ENCODE measurements at regions of chr22 and their contacts with region 1.

Region 1: GRCh38 chr22:41091132-41092022 is 1.0 kb upstream of the EP300 start:
- DNase-seq: peak; percentile 99 to 100
- ATAC-seq: peak; percentile 96 to 99 (median 98)
- H3K4me3 ChIP-seq: peak overlapping the region; percentile 73 to 100 (median 98)
- H3K27ac ChIP-seq: peak overlapping the region; percentile 100
- H3K4me1 ChIP-seq: peaks cover 0 to 38% (median 30%) of the 10 kb centered on the region in 9 donors
- H3K27me3 ChIP-seq: no peaks in the 10 kb centered on the region
- CTCF ChIP-seq: no peak

Region 2: GRCh38 chr22:40950962-40951794 is 140.2 kb before region 1 on chr22 and contains the start of gene RBX1:
- intact Hi-C with region 1: loop called in 9 of 10 experiments (anchors 1 to 5 kb)
- DNase-seq: peak; percentile 98 to 99
- ATAC-seq: peak; percentile 96 to 99 (median 97)
- H3K4me3 ChIP-seq: peak within 1 kb of the TSS; percentile 60 to 91 (median 74)
- H3K27ac ChIP-seq: peak within 1 kb of the TSS; percentile 62 to 100 (median 94)
- H3K4me1 ChIP-seq: peaks cover 0 to 47% (median 30%) of the 10 kb centered on the region in 9 donors
- H3K27me3 ChIP-seq: no peaks in the 10 kb centered on the region
- CTCF ChIP-seq: no peak
- total RNA-seq, gene RBX1: 58.0 to 71.6 (median 59.8) TPM

Region 3: DNA sequence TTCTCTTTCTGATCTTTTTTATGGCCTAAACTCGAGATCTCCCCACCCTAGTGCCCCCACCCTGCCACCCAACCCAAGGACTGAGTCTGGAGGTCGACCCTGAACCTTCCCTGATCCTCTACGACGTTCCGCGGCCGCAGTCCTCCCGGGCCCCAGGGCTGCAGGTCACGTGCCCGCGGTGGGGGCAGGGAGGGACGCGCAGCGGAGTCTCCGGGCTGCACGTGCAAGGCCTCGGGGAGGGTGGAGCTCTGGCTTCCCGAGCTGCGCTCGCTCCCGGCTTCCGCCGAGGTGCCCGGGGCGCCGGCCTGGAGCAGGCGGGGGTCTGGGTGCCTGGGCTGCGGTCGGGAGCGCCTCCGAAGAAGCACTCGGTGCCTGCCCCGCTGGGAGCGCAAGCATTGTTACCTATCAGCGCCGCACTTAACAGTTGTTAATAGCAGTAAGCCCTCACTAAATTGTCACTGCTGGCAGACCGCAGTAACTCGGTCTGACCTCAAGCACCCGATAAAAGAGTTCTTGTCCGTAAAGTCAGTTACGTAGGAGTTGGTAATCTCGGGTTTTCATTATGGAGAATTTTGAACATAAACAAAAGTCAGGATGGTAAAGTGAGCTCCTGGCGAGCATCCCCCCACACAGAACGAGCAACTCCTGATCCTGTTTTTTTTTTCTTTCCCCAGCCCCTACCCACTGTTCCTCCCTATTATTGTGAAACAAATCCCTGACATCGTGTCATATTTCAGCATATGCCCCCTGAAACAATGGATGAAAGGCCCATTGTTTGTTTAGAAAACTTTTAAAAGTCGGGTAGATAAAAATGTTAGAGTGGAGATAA is 68.7 kb before region 1 on chr22:
- intact Hi-C with region 1: loop called in 7 of 10 experiments (anchors 1 to 10 kb)
- DNase-seq: peak; percentile 91 to 94
- ATAC-seq: peak; percentile 94 to 97 (median 95)
- H3K4me3 ChIP-seq: peak overlapping the region; percentile 66 to 91 (median 74)
- H3K27ac ChIP-seq: peak overlapping the region; percentile 66 to 100 (median 98)
- H3K4me1 ChIP-seq: peaks cover 3 to 18% (median 15%) of the 10 kb centered on the region in 9 donors
- H3K27me3 ChIP-seq: no peaks in the 10 kb centered on the region
- CTCF ChIP-seq: peak in 2 of 9 donors; percentile 3 to 16

Region 4: DNA sequence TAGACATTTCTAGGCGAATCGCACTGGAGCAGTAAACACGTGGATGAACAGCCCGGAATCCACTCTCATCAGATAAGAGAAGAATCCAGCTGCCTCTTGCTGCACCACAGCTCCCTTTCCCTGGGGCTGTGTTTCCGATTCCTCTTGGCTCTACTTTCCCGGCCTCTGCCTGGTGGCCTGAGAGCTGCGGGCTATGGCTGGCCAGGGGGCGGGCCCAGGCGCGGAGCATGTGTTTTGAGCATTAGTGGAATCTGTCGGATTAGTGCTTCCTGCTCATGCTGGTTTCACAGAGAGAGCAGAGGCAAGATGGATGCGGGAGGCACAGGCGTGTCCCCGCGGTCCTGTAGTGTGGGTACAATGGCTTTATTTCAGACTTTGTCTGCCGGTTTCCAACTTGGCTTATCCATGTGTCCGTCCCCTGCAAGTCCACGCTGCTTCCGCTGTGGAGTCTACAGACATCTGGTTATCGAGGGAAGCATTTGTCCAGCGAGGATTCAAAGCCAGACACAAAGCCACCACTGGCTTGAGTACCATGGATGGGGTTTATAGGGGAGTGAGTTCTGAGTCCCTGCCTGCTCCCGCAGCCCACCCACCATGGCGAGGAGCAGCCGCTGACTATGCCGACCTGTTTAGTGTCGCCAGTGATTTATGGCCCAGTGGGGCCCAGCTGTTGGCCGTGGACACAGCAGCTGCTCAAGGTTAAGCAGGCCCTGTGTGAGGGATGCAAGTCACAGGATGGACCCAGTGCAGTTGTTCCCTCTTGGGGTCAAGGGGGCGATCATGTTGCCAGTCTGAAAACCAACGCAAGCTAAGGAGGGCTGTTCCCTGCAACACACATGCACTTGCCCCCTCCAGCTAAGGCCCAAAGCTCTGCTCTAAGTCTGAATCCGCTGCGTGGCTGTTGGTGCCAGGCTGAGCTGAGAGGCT is 42.3 kb before region 1 on chr22:
- intact Hi-C with region 1: loop called in 1 of 10 experiments (anchors 1 kb)
- DNase-seq: peak; percentile 76 to 81
- ATAC-seq: peak; percentile 85 to 98 (median 96)
- H3K4me3 ChIP-seq: peak overlapping the region in 6 of 10 donors; percentile 31 to 43 (median 37)
- H3K27ac ChIP-seq: peak overlapping the region in 9 of 10 donors; percentile 26 to 79 (median 53)
- H3K4me1 ChIP-seq: peaks cover 0 to 27% (median 12%) of the 10 kb centered on the region in 9 donors
- H3K27me3 ChIP-seq: no peaks in the 10 kb centered on the region
- CTCF ChIP-seq: no peak

Region 5: DNA sequence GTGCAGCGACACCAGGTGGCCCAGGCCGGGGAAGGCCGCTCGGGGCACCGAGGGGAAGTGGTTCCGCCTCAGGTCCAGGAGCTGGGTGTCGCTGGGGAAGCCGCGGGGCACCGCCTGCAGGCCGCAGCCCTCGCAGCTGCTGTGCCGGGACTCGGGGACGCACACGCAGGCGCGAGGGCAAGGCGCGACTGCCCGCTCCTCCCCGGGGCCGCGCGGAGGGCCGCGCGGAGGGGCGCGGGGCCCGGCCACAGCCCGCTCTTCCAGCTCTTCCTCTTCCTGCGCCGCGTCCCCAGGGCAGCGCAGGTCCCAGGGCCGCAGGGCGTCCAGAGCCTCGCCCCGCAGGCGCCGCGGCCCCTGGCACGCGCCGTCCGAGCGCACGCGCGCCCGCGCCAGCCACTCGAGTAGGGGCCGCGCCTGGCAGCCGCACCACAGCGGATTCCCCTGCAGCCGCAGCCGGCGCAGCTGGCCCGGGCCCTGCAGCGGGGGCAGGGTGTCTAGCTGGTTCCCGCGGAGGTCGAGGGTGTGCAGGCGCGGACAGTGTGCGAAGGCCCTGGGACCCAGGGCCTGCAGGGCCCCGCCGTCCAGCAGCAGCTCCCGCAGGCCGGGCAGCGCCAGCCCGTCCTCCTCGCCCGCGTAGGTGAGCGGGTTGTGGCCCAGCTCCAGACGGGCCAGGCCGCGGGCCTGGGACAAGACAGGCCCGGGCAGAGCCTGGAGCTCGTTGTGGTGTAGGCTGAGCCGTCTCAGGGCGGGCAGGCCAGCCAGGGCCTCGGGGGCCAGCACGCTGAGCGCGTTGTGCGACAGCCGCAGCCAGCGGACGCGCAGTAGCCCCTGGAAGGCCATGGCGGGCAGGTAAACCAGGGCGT is 146.6 kb after region 1 on chr22:
- intact Hi-C with region 1: loop called in 1 of 10 experiments (anchors 5 kb)
- DNase-seq: peak; percentile 64 to 77
- ATAC-seq: peak; percentile 35 to 87 (median 74)
- H3K4me3 ChIP-seq: peak overlapping the region in 9 of 10 donors; percentile 28 to 55 (median 50)
- H3K27ac ChIP-seq: peak overlapping the region in 9 of 10 donors; percentile 46 to 76 (median 64)
- H3K4me1 ChIP-seq: peaks cover 8 to 37% (median 20%) of the 10 kb centered on the region in 9 donors
- H3K27me3 ChIP-seq: no peaks in the 10 kb centered on the region
- CTCF ChIP-seq: peak in 8 of 9 donors; percentile 35 to 77 (median 67)

Region 6: DNA sequence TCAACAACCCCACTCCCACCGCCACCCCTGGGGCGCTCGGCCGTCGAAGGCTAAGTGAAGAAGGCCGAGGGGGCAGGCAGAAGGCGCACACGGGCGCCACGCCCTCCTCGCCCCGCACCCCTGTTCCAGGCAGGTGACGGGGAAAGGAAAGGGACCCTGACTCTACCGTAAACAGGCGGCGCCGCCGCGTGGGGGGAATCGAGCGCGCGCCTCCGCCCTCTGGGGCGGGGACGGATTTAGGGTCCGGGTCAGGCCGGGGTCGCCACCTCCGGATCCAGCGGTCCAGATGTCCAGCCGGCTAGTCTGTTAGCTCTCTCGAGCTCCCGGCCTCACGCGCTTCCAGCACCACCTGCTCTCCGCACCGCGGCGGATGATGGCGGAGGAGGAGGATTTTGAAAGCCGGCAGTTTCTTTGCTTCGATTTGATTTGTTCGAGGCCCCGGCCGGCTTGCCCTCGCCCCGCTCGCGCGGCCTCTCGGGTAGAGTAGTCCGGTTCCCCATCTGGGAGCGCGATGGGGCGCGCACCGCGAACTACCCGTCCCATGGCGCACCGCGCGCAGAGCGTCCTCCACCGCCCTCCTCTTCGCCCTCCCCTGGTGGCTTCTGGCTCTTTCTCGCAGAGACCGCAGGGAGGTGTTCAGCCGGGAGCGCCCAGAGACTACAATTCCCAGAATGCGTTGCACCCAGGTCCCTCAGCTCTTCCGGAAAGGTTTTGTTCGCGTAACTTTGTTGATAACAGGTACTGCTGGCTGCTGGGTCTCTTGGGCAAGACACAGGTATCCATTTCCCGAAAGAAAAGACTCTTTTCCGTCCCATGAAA is 194.7 kb after region 1 on chr22 and contains the start of gene RANGAP1:
- intact Hi-C with region 1: loop called in 2 of 10 experiments (anchors 10 kb)
- DNase-seq: peak; percentile 98
- ATAC-seq: peak; percentile 99 to 100 (median 100)
- H3K4me3 ChIP-seq: peak within 1 kb of the TSS; percentile 69 to 98 (median 90)
- H3K27ac ChIP-seq: peak within 1 kb of the TSS; percentile 13 to 94 (median 83)
- H3K4me1 ChIP-seq: peaks cover 0 to 31% (median 25%) of the 10 kb centered on the region in 9 donors
- H3K27me3 ChIP-seq: no peaks in the 10 kb centered on the region
- CTCF ChIP-seq: peak in 7 of 9 donors; percentile 4 to 54 (median 36)
- total RNA-seq, gene RANGAP1: 26.5 to 53.8 (median 31.4) TPM